Cardiac septum (tissue), 1 donor: ENCODE measurements at regions of chr7 and their contacts with region 1.

Region 1: DNA sequence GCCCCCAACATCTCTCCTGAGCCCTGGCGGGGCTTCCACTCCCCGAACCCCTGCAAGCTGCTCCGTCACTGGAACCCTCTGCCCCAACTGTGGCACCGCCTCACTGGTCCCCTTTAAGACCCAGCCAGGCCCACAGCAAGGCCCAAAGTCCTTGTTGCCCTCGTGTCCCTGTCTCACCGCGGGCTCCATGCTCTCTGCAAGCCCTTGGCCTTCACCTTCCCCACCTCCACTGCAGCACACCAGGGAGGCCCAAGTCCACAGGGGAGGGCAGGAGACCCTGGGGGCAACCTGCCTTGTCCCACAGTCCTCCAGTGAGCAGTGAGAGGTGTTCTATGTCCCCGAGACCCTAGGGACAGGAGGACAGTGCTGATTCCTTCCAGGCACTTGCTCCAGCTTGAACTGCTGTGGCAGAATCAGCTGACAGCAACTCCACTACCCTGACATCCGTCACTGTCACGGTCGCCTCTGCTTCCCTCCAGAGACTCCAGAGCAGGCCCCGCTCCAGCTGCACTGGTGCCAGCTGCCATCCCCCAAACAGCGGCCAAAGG is 105.3 kb downstream of the CYTH3 start:
- DNase-seq: peak; percentile 75

Region 2: DNA sequence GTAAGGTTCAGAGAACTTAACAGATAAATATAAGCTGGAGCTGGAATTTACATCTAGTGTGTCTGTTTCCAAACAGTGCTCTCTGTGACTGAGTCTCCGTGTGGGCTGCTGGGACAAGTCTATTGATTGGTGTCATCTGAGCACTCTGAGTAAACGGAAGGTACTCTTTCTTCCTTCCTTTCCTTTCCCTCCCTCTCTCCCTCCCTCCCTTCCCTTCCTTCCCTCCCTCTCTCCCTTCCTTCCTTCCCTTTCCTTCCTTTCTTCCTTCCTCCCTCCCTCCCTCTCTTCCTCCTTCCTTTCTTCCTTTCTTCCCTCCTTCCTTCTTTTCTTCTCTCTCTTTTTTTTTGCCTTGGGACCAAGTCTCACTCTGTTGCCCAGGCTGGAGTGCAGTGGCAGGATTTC is 74.1 kb before region 1 on chr7:
- intact Hi-C with region 1: no loop called
- DNase-seq: peak; percentile 10

Region 3: GRCh38 chr7:6221340-6222319 is 54.6 kb after region 1 on chr7:
- intact Hi-C with region 1: loop called (anchors 5 kb)
- DNase-seq: no peak